ENCODE measurements at regions of chr11 and their contacts with region 1.

Region 1: DNA sequence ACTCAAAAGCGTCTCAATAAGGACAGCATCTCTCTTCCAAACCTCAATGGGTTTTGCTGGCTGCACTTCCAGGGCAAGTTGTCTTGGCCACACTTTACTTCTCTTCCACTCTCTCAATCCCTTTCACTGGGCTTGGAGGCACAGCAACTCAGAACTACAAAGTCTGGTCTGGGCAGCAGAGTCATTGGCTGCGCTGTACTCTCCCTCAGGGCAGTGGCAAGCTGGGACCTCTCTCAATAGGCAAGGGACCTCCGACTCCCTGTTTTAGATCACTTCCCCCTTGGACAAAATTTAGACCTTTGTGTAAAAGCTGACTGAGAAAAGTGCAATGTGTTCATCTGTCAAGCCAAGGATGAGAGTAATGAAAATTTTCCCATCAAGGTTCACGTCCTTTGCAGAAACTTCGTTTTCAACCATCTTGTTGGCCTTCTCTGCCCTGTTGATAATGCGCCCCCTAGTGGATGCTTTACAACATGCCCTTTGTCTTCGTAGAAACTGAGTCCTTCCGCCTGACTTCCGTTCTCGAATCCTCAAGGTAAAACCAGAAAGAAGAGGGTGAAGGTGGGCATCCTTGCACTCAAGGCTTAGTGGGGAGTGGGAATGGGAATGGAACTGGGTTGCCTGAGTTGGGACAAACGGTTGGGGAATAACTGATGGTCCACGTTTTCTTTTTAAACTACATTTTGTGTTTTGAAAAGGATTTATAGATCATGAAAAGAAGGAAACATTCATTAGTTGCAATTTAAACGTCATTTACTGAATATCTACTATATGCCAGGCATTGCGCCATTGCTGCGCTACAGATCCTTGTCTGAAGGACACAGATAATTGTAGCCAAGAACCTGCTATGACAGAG is 99.1 kb downstream of the CD44 start:
- DNase-seq: peak; percentile 83
- H3K4me3 Mint-ChIP-seq: no peak overlapping the region
- H3K27ac Mint-ChIP-seq: no peak overlapping the region
- H3K4me1 Mint-ChIP-seq: peaks cover 22% of the 10 kb centered on the region
- H3K27me3 Mint-ChIP-seq: no peaks in the 10 kb centered on the region
- CTCF ChIP-seq: peak; percentile 54

Region 2: DNA sequence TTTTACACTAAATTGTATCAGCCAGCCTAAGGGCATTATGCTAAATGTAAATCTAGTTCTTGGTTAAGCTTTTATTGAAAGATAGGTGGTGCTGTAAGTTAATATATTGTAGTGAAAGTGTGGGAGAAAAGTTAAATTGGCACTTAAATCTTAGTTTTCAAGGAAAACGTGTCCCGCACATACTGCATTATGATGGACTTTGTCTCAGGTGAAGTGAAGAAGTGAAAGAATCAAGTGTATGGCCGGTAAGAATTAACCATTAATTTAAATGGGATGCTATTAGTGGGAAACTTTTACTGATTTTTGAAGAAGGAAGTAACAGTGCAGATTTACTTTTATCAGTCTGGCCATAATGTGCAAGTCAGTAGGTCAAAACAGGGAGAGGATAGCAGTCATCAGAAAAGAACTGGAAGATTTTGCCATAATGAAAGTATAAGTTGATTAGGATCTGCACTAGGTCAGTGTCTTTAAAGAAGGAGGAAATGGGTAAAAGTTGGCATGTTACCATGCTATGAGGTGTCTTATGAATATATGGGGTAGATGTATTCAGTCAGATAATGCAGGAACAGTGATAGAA is 240.0 kb before region 1 on chr11:
- CTCF ChIA-PET with region 1: interaction called, 5 read pairs
- POLR2A ChIA-PET with region 1: no interaction called
- intact Hi-C with region 1: loop called (anchors 1 kb)
- DNase-seq: peak; percentile 21
- H3K4me3 Mint-ChIP-seq: no peak overlapping the region
- H3K27ac Mint-ChIP-seq: peak overlapping the region; percentile 6
- H3K4me1 Mint-ChIP-seq: peaks cover 6% of the 10 kb centered on the region
- H3K27me3 Mint-ChIP-seq: no peaks in the 10 kb centered on the region
- CTCF ChIP-seq: peak; percentile 44

Measured in MCF 10A (cell line).